AG04449 (cell line): ENCODE measurements at regions of chr9 and their contacts with region 1.

Region 1: GRCh38 chr9:128733256-128733655 is 9.3 kb upstream of the ZDHHC12 start:
- DNase-seq: no peak
- H3K4me3 ChIP-seq: no peak overlapping the region
- CTCF ChIP-seq: peak; percentile 70

Region 2: DNA sequence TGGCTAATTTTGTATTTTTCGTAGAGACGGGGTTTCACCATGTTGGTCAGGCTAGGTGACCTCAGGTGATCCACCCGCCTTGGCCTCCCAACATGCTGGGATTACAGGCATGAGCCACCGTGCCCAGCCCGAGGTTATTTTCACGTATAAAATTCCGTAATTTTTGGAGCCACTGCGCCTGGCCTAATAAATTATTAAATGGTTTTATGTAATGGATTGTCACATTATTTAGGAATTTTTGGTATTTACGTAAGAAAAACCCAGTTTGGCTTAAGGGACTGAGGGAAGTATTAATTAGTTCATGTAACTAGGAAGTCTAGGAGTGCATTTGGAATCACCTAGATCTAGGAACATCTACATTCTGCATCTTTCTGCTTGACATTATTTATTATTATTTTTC is 220.4 kb before region 1 on chr9:
- CTCF ChIA-PET with region 1: no interaction called
- POLR2A ChIA-PET with region 1: no interaction called
- DNase-seq: no peak
- H3K4me3 ChIP-seq: no peak overlapping the region
- CTCF ChIP-seq: no peak

Region 3: DNA sequence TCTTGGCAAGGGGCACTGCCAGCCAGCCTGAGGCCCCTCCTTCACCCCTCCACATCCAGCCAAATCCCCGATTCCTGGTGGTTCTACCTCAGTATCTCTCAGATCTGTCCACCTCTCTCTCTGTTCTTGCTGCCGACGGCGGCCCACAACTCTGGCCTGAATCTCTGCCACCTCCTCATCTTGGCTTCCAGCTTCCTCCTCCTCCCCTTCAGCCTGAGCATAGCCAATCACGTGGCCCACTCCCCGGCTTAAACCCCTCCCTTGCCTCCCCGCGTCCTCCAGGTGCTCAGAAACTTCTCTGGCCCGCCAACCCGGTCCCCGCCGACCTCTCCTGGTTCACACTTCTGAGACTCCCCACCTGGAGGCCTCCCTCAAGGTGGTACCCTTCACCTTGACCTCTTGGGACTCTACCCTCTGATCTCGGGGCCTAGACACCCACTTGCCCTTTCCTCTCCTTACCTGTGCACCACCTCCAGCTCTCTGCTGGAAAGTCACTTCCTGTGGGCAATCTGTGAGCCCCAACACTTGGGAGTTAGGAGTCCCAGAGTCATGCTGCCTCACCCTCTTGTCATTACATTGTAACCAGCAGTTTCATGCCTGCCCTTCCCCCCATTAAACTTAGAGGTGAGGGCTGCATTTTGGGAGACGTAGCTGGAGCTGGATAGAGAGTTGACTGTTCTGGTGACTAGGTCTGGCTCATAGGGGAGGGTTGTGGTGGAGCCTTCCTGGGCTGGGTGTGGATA is 48.8 kb before region 1 on chr9:
- CTCF ChIA-PET with region 1: no interaction called
- POLR2A ChIA-PET with region 1: no interaction called
- DNase-seq: no peak
- H3K4me3 ChIP-seq: peak overlapping the region; percentile 74
- CTCF ChIP-seq: no peak

Region 4: DNA sequence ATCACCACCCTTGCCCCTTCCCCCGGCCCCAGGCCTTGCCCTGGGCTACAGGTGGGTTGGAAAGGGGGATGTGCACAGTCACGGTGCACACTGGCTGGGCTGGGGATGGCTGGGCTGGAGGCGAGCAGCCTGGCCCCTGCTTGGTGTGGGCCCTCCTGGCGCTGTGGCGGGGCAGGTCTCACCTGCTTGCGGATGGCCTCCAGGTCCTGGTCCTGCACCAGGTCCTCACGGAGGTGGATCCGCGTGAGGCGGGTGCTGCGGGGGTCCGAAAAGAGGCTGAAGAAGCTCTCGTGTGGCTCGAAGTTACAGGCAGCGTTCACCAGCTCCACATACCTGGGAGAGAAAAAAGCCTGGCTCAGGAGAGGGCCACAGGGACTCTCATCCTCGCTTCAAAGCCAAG is 20.4 kb after region 1 on chr9:
- CTCF ChIA-PET with region 1: interaction called, 15 read pairs
- POLR2A ChIA-PET with region 1: no interaction called
- DNase-seq: no peak
- H3K4me3 ChIP-seq: no peak overlapping the region
- CTCF ChIP-seq: no peak

Region 5: GRCh38 chr9:129052592-129052991 is 319.3 kb after region 1 on chr9:
- CTCF ChIA-PET with region 1: no interaction called
- POLR2A ChIA-PET with region 1: no interaction called
- DNase-seq: no peak
- H3K4me3 ChIP-seq: no peak overlapping the region
- CTCF ChIP-seq: no peak

Region 6: GRCh38 chr9:129954868-129955550 is 1221.8 kb after region 1 on chr9:
- CTCF ChIA-PET with region 1: no interaction called
- POLR2A ChIA-PET with region 1: no interaction called
- DNase-seq: no peak
- H3K4me3 ChIP-seq: no peak overlapping the region
- CTCF ChIP-seq: no peak